MCF 10A (cell line): ENCODE measurements at regions of chr6 and their contacts with region 1.

Region 1: GRCh38 chr6:112330071-112330878 is 16.9 kb upstream of the RFPL4B start:
- DNase-seq: peak; percentile 92
- H3K4me3 Mint-ChIP-seq: peak overlapping the region; percentile 53
- H3K27ac Mint-ChIP-seq: peak overlapping the region; percentile 93
- H3K4me1 Mint-ChIP-seq: peaks cover 28% of the 10 kb centered on the region
- H3K27me3 Mint-ChIP-seq: no peaks in the 10 kb centered on the region
- CTCF ChIP-seq: no peak

Region 2: DNA sequence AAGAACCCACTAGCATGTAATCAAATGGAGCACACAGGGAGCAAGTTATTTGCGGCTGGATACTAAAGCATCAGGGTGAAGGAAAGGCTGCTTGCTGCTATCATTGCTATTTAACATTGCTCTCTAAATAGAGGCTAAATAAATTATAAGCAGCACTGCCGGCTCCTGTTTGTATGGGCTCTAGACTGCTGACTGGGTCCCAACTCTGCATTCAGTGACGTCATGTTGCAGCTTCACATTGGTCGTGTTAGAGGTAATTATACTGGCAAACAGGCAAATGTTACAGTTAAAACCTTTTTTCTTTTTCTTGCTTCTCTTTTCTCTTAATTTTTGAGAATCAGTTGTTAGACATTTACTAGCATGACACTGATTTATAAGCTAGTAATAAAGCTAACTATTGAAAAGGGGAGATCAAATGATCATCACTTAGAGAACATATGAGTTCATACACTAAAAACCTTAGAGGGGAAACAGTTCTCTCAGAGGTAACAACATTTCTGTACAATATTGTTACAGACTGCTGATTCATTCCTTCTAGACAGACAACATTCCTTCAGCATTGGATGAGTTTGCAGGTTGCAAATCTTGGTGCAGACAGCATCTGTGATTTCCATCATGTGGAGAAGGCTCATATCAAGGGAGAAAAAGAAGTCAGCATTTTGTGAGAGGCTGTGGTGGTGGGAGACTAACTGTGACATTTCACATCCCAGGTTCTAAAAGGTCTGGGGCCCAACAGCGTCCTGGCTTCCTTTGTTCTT is 32.7 kb after region 1 on chr6:
- CTCF ChIA-PET with region 1: no interaction called
- POLR2A ChIA-PET with region 1: no interaction called
- intact Hi-C with region 1: no loop called
- DNase-seq: no peak
- H3K4me3 Mint-ChIP-seq: no peak overlapping the region
- H3K27ac Mint-ChIP-seq: no peak overlapping the region
- H3K4me1 Mint-ChIP-seq: peaks cover 6% of the 10 kb centered on the region
- H3K27me3 Mint-ChIP-seq: no peaks in the 10 kb centered on the region
- CTCF ChIP-seq: no peak

Region 3: GRCh38 chr6:112396221-112396620 is 65.9 kb after region 1 on chr6:
- CTCF ChIA-PET with region 1: no interaction called
- POLR2A ChIA-PET with region 1: no interaction called
- intact Hi-C with region 1: no loop called
- DNase-seq: peak; percentile 43
- H3K4me3 Mint-ChIP-seq: no peak overlapping the region
- H3K27ac Mint-ChIP-seq: no peak overlapping the region
- H3K4me1 Mint-ChIP-seq: peaks cover 7% of the 10 kb centered on the region
- H3K27me3 Mint-ChIP-seq: no peaks in the 10 kb centered on the region
- CTCF ChIP-seq: no peak

Region 4: GRCh38 chr6:112683926-112684325 is 353.7 kb after region 1 on chr6:
- CTCF ChIA-PET with region 1: no interaction called
- POLR2A ChIA-PET with region 1: interaction called, 4 read pairs
- intact Hi-C with region 1: loop called (anchors 5 kb)
- DNase-seq: peak; percentile 71
- H3K4me3 Mint-ChIP-seq: no peak overlapping the region
- H3K27ac Mint-ChIP-seq: peak overlapping the region; percentile 31
- H3K4me1 Mint-ChIP-seq: peaks cover 5% of the 10 kb centered on the region
- H3K27me3 Mint-ChIP-seq: no peaks in the 10 kb centered on the region
- CTCF ChIP-seq: no peak